Activated CD4-positive, alpha-beta memory T cell treated with anti-CD3 and anti-CD28 coated beads for 36 hours (primary cell): ENCODE measurements at regions of chr9 and their contacts with region 1.

Region 1: GRCh38 chr9:122810306-122810946 is 10.5 kb downstream of the OR1K1 start:
- DNase-seq: peak; percentile 85
- H3K4me3 Mint-ChIP-seq: no peak overlapping the region
- H3K27ac Mint-ChIP-seq: no peak overlapping the region
- H3K4me1 Mint-ChIP-seq: peaks cover 29% of the 10 kb centered on the region
- H3K27me3 Mint-ChIP-seq: no peaks in the 10 kb centered on the region

Region 2: GRCh38 chr9:122092611-122093506 is 717.6 kb before region 1 on chr9 and contains the start of gene TTLL11:
- CTCF ChIA-PET with region 1: interaction called, 27 read pairs
- POLR2A ChIA-PET with region 1: no interaction called
- intact Hi-C with region 1: loop called (anchors 10 kb)
- DNase-seq: peak; percentile 97
- H3K4me3 Mint-ChIP-seq: peak within 1 kb of the TSS; percentile 79
- H3K27ac Mint-ChIP-seq: no peak within 1 kb of the TSS
- H3K4me1 Mint-ChIP-seq: peaks cover 33% of the 10 kb centered on the region
- H3K27me3 Mint-ChIP-seq: peaks cover 5% of the 10 kb centered on the region
- total RNA-seq, gene TTLL11: 0.97 TPM

Region 3: DNA sequence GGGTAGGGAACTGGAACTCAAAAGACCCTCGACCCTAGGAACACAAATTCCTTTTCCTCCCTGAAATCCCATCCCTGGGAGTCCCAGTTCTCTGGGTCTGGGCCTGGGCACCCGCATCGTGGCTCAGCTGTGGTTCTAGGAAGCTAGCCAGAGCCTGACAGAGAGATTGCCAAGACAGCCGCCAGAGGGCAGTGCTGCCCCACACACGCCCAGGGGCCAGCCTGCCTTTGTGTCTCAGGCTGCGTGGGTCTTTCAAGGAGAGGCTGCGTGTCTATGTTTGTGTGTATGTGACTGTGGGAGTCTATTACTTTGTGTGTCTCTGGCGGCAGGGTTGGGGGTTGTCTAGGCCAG is 685.3 kb before region 1 on chr9:
- CTCF ChIA-PET with region 1: interaction called, 34 read pairs
- POLR2A ChIA-PET with region 1: no interaction called
- intact Hi-C with region 1: loop called (anchors 1 kb)
- DNase-seq: peak; percentile 85
- H3K4me3 Mint-ChIP-seq: no peak overlapping the region
- H3K27ac Mint-ChIP-seq: no peak overlapping the region
- H3K4me1 Mint-ChIP-seq: peaks cover 18% of the 10 kb centered on the region
- H3K27me3 Mint-ChIP-seq: peaks cover 35% of the 10 kb centered on the region

Region 4: DNA sequence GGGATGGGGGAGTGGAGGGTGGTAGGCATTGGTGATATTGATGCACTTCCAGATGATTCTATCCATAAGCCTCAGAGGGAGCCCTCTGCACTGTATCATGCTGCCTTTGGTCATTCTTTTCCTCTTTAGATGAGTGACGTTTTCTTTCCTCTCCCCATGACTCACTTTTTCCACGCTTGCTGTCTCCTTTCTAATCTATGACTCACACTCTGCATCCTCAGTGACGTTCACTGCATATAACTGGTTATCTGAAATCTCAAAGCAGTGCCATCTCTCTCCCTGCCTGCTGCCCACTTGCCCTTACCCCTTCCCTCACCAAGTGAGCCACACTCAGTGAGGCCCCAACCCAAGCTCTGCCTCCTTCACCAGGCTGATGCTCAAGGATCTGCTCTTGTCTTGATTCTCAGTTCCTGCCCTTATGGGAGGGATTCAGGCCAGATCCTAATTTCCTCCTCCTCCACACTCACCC is 408.0 kb before region 1 on chr9:
- CTCF ChIA-PET with region 1: no interaction called
- POLR2A ChIA-PET with region 1: no interaction called
- intact Hi-C with region 1: loop called (anchors 1 kb)
- DNase-seq: peak; percentile 55
- H3K4me3 Mint-ChIP-seq: peak overlapping the region; percentile 57
- H3K27ac Mint-ChIP-seq: peak overlapping the region; percentile 82
- H3K4me1 Mint-ChIP-seq: peaks cover 14% of the 10 kb centered on the region
- H3K27me3 Mint-ChIP-seq: peaks cover 23% of the 10 kb centered on the region

Region 5: DNA sequence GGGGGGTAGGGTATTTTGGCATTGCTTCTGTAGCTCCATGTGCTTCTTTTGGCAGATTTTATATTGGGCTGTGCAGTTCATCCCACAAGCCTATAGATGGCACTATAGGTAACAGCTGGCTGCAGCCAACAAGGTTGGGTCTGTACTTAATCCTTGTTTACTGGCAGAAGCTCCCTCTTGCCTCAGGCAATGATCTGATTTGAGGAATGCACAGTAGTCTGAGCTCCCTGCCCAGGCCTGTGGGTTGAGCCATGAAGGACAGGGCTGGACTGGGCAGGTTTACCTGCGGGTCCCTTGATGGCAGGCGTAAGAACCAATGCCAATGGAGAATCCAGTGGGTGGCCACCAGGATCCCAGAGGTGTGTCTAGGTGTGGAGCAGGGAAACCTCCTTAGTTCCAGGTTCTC is 311.5 kb before region 1 on chr9:
- CTCF ChIA-PET with region 1: interaction called, 61 read pairs
- POLR2A ChIA-PET with region 1: no interaction called
- intact Hi-C with region 1: loop called (anchors 1 kb)
- DNase-seq: peak; percentile 17
- H3K4me3 Mint-ChIP-seq: no peak overlapping the region
- H3K27ac Mint-ChIP-seq: no peak overlapping the region
- H3K4me1 Mint-ChIP-seq: no peaks in the 10 kb centered on the region
- H3K27me3 Mint-ChIP-seq: peaks cover 36% of the 10 kb centered on the region

Region 6: DNA sequence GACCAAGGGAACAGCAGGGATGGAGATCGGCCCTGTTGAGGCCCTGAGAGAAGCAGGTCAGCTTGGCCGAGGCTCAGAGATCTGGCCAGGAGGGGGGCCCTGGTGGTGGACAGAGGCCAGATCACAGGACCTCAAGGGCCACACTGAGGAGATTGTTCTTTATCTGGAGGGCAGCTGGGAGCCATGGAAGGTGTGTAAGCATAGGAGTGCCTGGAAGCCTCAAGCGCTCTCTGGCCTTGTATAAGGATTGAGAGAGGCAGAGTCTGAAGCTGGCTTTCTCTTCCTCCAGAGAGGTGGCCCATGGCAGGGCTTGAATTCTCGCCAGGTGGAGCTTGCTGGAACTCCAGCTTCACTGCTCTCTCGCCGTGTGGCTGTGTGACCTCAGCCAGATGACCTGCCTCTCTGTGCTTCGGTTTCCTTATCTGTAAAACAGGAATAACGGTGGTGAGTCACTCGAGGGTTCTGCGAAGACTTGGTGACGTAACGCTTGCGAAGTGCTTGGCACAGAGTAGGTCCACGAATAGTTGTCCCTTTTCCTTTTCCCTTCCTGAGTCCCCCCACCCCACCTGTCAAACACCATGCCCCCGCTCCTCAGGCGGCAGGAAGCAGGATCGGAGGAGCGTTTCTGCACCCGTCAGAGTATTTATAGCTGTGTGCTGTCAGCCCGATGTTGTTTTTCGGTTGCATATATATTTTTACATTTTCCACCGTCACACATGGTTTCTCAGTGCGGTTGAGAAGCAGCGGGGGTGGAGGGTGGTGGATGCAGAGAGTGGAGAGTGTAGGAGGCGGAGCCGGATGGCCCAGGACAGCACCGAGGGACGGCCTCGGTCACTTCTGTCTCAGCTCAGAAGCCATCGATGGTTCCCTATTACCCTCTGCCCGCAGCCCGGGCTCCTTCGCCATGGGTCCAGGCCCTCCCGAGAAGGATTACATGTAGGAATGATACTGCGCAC is 528.6 kb after region 1 on chr9:
- CTCF ChIA-PET with region 1: no interaction called
- POLR2A ChIA-PET with region 1: interaction called, 3 read pairs
- intact Hi-C with region 1: loop called (anchors 1 kb)
- DNase-seq: peak; percentile 88
- H3K4me3 Mint-ChIP-seq: peak overlapping the region; percentile 80
- H3K27ac Mint-ChIP-seq: peak overlapping the region; percentile 95
- H3K4me1 Mint-ChIP-seq: peaks cover 34% of the 10 kb centered on the region
- H3K27me3 Mint-ChIP-seq: no peaks in the 10 kb centered on the region